ENCODE measurements at regions of chr19 and their contacts with region 1.

Region 1: GRCh38 chr19:55526216-55527196 is 10.4 kb downstream of the SBK2 start:
- DNase-seq: peak; percentile 87
- ATAC-seq: peak; percentile 87
- H3K4me3 ChIP-seq: no peak overlapping the region
- H3K27ac ChIP-seq: no peak overlapping the region
- H3K4me1 ChIP-seq: peaks cover 12% of the 10 kb centered on the region; the same call in 1 of the 2 replicates
- H3K27me3 ChIP-seq: no peaks in the 10 kb centered on the region
- CTCF ChIP-seq: no peak

Region 2: DNA sequence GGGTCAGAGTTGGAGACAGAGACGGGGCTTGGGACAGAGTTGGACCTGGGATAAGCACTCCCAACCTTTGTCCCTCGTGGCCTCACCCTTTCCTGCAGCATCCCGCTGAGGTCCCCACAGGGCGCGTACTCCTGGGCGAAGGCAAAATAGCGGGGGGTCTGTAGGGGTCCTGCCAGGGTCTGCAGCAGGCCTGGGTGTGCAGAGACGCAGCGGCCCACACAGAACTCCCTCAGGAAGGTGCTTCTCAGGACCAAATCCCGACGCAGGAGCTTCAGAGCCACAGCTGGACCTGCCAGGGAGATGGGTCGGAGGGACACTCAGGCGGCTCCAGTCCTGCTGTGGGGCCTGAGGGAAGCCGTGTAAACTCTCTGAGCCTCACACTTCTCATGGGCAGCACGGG is 17.5 kb after region 1 on chr19:
- CTCF ChIA-PET with region 1: interaction called, 12 read pairs
- POLR2A ChIA-PET with region 1: no interaction called
- intact Hi-C with region 1: loop called (anchors 1 kb)
- DNase-seq: no peak
- ATAC-seq: no peak
- H3K4me3 ChIP-seq: no peak overlapping the region
- H3K27ac ChIP-seq: no peak overlapping the region
- H3K4me1 ChIP-seq: peaks cover 31% of the 10 kb centered on the region
- H3K27me3 ChIP-seq: no peaks in the 10 kb centered on the region
- CTCF ChIP-seq: no peak

Measured in PC-3 (cell line).